ENCODE measurements at regions of chr9 and their contacts with region 1.

Region 1: GRCh38 chr9:4640027-4640426 is 22.1 kb upstream of the PLPP6 start:
- H3K4me3 ChIP-seq: no peak overlapping the region
- H3K27ac ChIP-seq: no peak overlapping the region
- H3K4me1 ChIP-seq: no peaks in the 10 kb centered on the region; the same call in 1 of the 2 replicates
- CTCF ChIP-seq: peak; percentile 35; the same call in 1 of the 2 replicates

Region 2: GRCh38 chr9:4315582-4316215 is 324.3 kb before region 1 on chr9:
- CTCF ChIA-PET with region 1: interaction called, 10 read pairs
- POLR2A ChIA-PET with region 1: no interaction called
- H3K4me3 ChIP-seq: no peak overlapping the region
- H3K27ac ChIP-seq: no peak overlapping the region
- H3K4me1 ChIP-seq: no peaks in the 10 kb centered on the region
- CTCF ChIP-seq: peak; percentile 54; the same call in 1 of the 2 replicates

Region 3: DNA sequence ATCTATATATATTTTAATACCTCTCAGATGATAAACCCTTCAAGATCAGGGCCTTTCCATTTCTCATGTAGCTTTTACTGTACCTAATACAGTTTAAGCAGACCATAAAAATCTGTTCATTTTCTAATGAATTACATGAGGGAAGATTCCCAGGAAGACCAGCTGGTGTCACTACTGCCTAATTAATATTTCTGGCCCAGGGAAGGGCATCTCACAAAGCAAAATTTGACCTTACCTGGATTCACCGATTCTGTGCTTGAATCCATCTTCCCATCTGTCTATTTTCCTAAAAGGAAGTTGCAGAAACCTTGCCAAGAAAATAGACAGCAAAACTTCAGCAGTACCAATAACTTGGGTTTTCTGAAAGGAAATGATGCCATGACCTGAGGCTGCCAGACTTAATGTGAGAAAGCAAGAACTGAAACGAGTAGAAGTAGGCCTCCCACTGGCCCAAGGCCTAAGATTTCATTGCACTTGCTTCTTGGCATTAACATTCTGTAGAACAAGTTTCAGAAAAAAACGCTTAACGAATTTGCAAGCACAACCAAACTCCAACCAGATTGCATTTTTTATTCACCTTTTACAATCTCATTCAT is 257.2 kb before region 1 on chr9:
- CTCF ChIA-PET with region 1: interaction called, 87 read pairs
- POLR2A ChIA-PET with region 1: no interaction called
- H3K4me3 ChIP-seq: no peak overlapping the region
- H3K27ac ChIP-seq: no peak overlapping the region
- H3K4me1 ChIP-seq: no peaks in the 10 kb centered on the region
- CTCF ChIP-seq: peak; percentile 35; the same call in 1 of the 2 replicates

Region 4: GRCh38 chr9:4604678-4605095 is 35.3 kb before region 1 on chr9:
- CTCF ChIA-PET with region 1: interaction called, 33 read pairs
- POLR2A ChIA-PET with region 1: no interaction called
- H3K4me3 ChIP-seq: no peak overlapping the region
- H3K27ac ChIP-seq: no peak overlapping the region
- H3K4me1 ChIP-seq: no peaks in the 10 kb centered on the region
- CTCF ChIP-seq: no peak

Region 5: GRCh38 chr9:4662108-4662988 is 22.3 kb after region 1 on chr9 and contains the start of gene PLPP6:
- CTCF ChIA-PET with region 1: interaction called, 14 read pairs
- POLR2A ChIA-PET with region 1: interaction called, 4 read pairs
- H3K4me3 ChIP-seq: peak within 1 kb of the TSS; percentile 86
- H3K27ac ChIP-seq: peak within 1 kb of the TSS; percentile 86
- H3K4me1 ChIP-seq: peaks cover 10% of the 10 kb centered on the region
- CTCF ChIP-seq: peak; percentile 66

Region 6: GRCh38 chr9:4774209-4774608 is 134.2 kb after region 1 on chr9:
- CTCF ChIA-PET with region 1: no interaction called
- POLR2A ChIA-PET with region 1: no interaction called
- H3K4me3 ChIP-seq: no peak overlapping the region
- H3K27ac ChIP-seq: no peak overlapping the region
- H3K4me1 ChIP-seq: no peaks in the 10 kb centered on the region
- CTCF ChIP-seq: no peak

Region 7: GRCh38 chr9:4955836-4956235 is 315.8 kb after region 1 on chr9:
- CTCF ChIA-PET with region 1: no interaction called
- POLR2A ChIA-PET with region 1: no interaction called
- H3K4me3 ChIP-seq: no peak overlapping the region
- H3K27ac ChIP-seq: no peak overlapping the region
- H3K4me1 ChIP-seq: no peaks in the 10 kb centered on the region
- CTCF ChIP-seq: no peak